ENCODE measurements at regions of chr1 and their contacts with region 1.

Region 1: GRCh38 chr1:36342481-36343478 is 19.3 kb upstream of the EVA1B start:
- DNase-seq: peak; percentile 39
- ATAC-seq: peak; percentile 82
- H3K4me3 ChIP-seq: no peak overlapping the region
- H3K27ac ChIP-seq: no peak overlapping the region
- H3K4me1 ChIP-seq: peaks cover 5% of the 10 kb centered on the region; the same call in 1 of the 2 replicates
- H3K27me3 ChIP-seq: no peaks in the 10 kb centered on the region
- CTCF ChIP-seq: peak; percentile 90; the same call in 1 of the 2 replicates

Region 2: GRCh38 chr1:36285448-36286101 is 57.2 kb before region 1 on chr1:
- CTCF ChIA-PET with region 1: interaction called, 11 read pairs
- POLR2A ChIA-PET with region 1: no interaction called
- in situ Hi-C with region 1: no loop called
- intact Hi-C with region 1: no loop called
- DNase-seq: peak; percentile 50
- ATAC-seq: peak; percentile 93
- H3K4me3 ChIP-seq: no peak overlapping the region
- H3K27ac ChIP-seq: no peak overlapping the region
- H3K4me1 ChIP-seq: no peaks in the 10 kb centered on the region; the same call in 1 of the 2 replicates
- H3K27me3 ChIP-seq: no peaks in the 10 kb centered on the region
- CTCF ChIP-seq: peak; percentile 79

Region 3: DNA sequence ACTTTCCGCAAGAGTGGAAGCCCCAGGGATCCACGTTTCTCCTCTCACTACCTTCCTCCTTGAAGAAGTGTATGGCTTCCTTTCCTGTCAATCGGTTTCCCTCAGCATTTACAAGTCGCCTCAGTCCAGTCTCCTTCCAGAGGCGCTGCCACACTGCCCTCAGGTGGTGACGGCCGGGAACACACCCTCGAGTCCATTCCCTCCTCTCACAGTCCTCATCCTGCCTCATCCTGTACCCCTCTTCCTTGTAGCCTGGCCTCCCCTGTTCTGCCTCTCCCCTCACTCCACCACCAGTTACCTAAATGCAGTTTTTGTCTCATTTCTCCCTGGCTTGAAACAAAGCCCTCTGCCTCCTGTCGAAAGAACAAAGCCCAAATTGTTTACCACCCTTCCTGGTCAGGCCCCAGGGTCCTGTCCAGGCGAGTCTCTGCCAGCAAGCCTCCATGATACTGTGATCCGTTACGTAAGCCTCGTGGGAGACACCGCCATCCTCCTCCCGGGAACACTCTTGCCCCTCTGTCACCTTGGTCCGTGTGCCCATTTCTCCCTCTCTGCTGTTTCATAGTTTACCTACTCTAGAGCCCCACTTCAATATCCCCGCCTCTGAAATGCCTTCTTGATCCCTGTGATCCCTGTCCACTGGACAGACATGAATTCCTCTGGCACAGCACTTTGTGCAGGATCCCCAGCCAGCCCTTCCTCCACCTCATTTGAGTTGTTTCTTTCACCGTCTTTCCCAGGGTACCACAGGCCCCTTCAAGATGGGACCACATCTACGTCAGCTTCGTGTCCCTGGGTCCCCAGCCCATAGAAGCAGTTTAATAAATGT is 78.3 kb after region 1 on chr1:
- CTCF ChIA-PET with region 1: interaction called, 3 read pairs
- POLR2A ChIA-PET with region 1: interaction called, 5 read pairs
- in situ Hi-C with region 1: no loop called
- intact Hi-C with region 1: loop called (anchors 2 kb)
- DNase-seq: peak; percentile 83
- ATAC-seq: peak; percentile 98
- H3K4me3 ChIP-seq: no peak overlapping the region
- H3K27ac ChIP-seq: 0 out of 2 replicates have a peak overlapping the region, but pooled peaks have one; percentile 25
- H3K4me1 ChIP-seq: peaks cover 3% of the 10 kb centered on the region
- H3K27me3 ChIP-seq: no peaks in the 10 kb centered on the region
- CTCF ChIP-seq: peak; percentile 97

Region 4: GRCh38 chr1:36486436-36487335 is 143.9 kb after region 1 on chr1:
- CTCF ChIA-PET with region 1: no interaction called
- POLR2A ChIA-PET with region 1: no interaction called
- in situ Hi-C with region 1: no loop called
- intact Hi-C with region 1: no loop called
- DNase-seq: no peak
- ATAC-seq: no peak; the same call in 1 of the 2 replicates
- H3K4me3 ChIP-seq: peak overlapping the region in 1 of 2 experiments; percentile 7; a peak in 1 of 4 replicates
- H3K27ac ChIP-seq: no peak overlapping the region
- H3K4me1 ChIP-seq: no peaks in the 10 kb centered on the region
- H3K27me3 ChIP-seq: no peaks in the 10 kb centered on the region
- CTCF ChIP-seq: no peak